Caco-2 (cell line): ENCODE measurements at regions of chr1 and their contacts with region 1.

Region 1: GRCh38 chr1:202810615-202811295 is at the start of gene PCAT6:
- DNase-seq: peak; percentile 97
- H3K4me3 ChIP-seq: peak within 1 kb of the TSS; percentile 62
- H3K4me3 Mint-ChIP-seq: peak within 1 kb of the TSS; percentile 89
- H3K27ac Mint-ChIP-seq: peak within 1 kb of the TSS; percentile 53
- H3K4me1 ChIP-seq: peaks cover 30% of the 10 kb centered on the region
- H3K4me1 Mint-ChIP-seq: peaks cover 41% of the 10 kb centered on the region
- H3K27me3 ChIP-seq: no peaks in the 10 kb centered on the region
- H3K27me3 Mint-ChIP-seq: no peaks in the 10 kb centered on the region
- CTCF ChIP-seq: no peak
- total RNA-seq, gene PCAT6: 1.4 TPM in 1 of 2 replicates, not detected in the other

Region 2: GRCh38 chr1:202547215-202547614 is 263.5 kb before region 1 on chr1:
- CTCF ChIA-PET with region 1: no interaction called
- POLR2A ChIA-PET with region 1: no interaction called
- intact Hi-C with region 1: no loop called
- DNase-seq: no peak
- H3K4me3 ChIP-seq: no peak overlapping the region
- H3K4me3 Mint-ChIP-seq: no peak overlapping the region
- H3K27ac Mint-ChIP-seq: no peak overlapping the region
- H3K4me1 ChIP-seq: peaks cover 6% of the 10 kb centered on the region
- H3K4me1 Mint-ChIP-seq: peaks cover 17% of the 10 kb centered on the region
- H3K27me3 ChIP-seq: no peaks in the 10 kb centered on the region
- H3K27me3 Mint-ChIP-seq: no peaks in the 10 kb centered on the region
- CTCF ChIP-seq: no peak

Region 3: DNA sequence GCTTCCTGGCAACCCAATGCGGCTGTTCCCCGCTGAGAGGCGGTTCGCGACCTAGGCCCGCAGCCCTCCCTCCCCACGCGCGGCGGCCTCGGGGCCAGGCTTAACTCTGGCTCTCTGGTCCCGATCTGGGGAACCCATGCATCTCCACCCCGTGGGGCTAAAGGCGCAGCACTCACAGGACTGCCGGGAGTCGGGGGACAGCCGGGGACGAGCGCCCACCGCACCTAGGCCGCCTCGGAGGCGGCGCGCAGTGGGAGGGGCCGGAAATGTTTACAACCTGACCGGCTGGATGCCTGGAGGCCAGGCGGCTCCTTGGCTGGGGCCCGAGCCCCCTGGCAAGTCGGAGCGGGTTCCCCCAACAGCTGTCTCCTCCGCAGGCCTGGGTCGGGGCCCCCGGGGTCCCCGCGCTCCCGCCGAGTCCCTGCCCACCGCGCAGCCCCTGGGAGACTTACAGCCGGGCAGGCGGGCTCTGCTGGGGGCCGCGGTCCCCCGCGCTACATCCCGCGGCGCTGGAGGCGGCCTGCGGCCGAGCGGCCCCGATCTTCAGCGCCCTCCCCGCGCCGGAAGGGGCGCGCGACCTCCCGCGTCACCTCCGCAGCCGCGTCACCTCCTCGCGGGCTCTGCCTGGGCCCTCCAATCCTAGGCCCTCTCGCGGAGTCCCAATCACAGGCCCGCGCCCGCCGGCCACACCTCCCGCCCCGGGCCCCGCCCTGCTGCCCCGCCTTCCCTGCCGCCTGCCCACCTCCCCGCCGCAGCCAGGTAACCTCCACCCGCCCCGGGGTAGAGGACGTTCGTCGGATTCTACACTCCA is 147.2 kb after region 1 on chr1 and contains the start of gene ADIPOR1:
- CTCF ChIA-PET with region 1: no interaction called
- POLR2A ChIA-PET with region 1: no interaction called
- intact Hi-C with region 1: loop called (anchors 1 kb)
- DNase-seq: peak; percentile 94 to 95
- H3K4me3 ChIP-seq: peak within 1 kb of the TSS; percentile 75
- H3K4me3 Mint-ChIP-seq: peak within 1 kb of the TSS; percentile 82
- H3K27ac Mint-ChIP-seq: peak within 1 kb of the TSS; percentile 49
- H3K4me1 ChIP-seq: peaks cover 18% of the 10 kb centered on the region
- H3K4me1 Mint-ChIP-seq: peaks cover 20% of the 10 kb centered on the region
- H3K27me3 ChIP-seq: no peaks in the 10 kb centered on the region
- H3K27me3 Mint-ChIP-seq: no peaks in the 10 kb centered on the region
- CTCF ChIP-seq: peak in 1 of 2 experiments; percentile 31
- total RNA-seq, gene ADIPOR1: 68.3 and 71.4 TPM in 2 replicates